HEK293 (cell line): ENCODE measurements at regions of chr19 and their contacts with region 1.

Region 1: DNA sequence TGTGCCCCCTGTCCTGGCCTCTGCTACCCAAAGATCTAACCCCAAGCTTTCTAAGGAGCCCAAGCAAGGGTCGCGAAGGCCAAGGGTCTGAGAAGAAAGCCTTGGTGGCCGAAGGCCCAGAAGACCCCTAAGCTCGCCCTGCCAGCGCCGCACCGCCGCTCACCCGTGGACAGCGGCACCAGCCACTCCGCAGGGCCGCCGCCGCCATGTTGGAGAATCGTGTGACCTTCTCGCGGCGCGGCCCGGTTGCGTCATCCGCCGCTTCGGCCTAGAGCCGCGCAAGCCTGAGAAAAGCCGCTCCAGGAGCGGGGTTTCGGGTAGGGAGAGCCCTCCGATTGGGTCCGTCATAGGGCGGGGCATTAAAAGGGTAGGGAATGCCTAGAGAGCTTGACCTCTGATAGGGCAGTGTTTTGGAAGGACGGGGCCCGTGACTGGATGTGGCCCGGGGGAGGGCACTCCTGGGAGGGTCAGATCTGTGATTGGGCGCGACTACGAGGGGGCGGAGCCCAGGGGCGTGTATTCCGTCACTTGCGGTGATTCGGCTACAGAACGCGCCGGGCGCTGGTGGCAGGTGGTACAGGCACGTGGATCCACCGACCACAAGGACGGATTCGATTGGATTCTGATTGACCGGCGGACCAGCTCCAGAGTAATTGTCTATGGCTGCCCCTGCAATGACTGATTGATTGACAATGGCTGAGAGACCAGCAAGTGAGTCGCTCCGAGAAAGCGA is at the start of gene TIMM44:
- H3K4me3 ChIP-seq: peak within 1 kb of the TSS; percentile 99
- H3K27ac ChIP-seq: peak within 1 kb of the TSS; percentile 90
- H3K4me1 ChIP-seq: no peaks in the 10 kb centered on the region
- CTCF ChIP-seq: no peak

Region 2: DNA sequence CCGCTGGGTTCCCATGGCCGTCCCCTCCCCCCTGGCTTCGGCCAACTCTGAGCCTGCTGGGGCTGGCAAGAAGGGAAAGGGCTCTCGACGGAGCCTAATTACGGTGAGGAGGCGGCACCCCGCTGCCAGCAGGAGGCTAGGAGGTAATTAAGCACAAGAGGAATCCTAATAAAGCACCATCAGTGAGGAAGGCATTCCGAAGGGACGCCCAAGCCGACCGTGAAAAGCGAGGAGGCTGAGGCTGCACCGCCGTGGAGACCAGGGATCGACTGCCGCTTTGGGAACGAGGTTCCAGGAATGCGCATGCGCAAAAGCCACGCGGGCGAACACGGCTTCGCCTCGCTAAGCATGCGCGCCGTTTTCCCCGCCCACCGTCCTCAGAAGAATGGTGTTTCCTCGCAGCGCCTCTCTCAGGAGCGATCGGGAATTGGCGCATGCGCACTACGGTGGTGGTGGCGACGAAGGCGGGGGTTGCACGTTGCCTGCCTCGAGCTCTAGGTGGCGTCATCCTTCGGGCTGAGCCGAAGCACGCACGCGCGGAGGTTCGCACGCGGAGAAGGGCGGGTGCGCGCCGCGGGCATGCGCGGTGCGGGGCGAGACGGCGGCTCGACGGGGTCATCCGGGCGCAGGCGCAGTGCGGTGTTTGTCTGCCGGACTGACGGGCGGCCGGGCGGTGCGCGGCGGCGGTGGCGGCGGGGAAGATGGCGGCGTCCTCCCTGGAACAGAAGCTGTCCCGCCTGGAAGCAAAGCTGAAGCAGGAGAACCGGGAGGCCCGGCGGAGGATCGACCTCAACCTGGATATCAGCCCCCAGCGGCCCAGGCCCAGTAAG is 40.2 kb before region 1 on chr19 and contains the start of gene MAP2K7:
- CTCF ChIA-PET with region 1: interaction called, 5 read pairs
- POLR2A ChIA-PET with region 1: interaction called, 13 read pairs
- H3K4me3 ChIP-seq: peak within 1 kb of the TSS; percentile 90
- H3K27ac ChIP-seq: peak within 1 kb of the TSS; percentile 80
- H3K4me1 ChIP-seq: peaks cover 5% of the 10 kb centered on the region; the same call in 1 of the 2 replicates
- CTCF ChIP-seq: peak; percentile 100

Region 3: DNA sequence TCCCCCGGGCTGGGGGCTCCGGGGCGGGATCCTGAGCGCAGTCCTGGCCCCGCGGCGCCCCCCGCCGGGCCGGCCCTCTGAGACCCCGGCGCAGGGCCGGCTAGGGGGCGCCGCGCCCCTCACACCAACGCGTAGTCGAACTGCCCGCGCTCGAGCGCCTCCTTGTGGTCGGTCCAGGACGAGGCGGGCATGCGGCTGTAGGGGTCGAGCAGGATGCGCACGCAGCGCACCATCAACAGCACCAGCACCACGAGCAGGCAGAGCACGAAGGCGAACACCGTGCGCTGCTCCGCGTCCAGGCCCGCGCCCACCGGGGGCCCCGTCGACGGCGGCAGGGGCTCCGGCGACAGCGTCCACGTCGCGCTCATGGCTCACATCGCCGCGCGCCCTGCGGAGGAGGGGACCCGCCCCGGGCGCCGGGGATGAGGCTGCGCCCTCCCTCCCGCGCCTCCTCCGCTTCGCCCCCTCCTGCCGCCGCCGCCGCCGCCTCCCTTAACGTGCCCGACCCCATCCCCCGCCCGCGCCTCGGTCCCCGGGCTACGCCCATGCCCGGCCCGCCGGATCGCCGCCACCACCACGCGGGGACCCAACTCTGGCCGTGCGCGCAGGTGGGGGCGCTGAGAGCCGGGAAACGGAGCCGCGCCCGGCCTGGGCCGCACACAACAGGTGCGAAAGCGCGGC is 18.3 kb before region 1 on chr19:
- CTCF ChIA-PET with region 1: interaction called, 25 read pairs
- POLR2A ChIA-PET with region 1: interaction called, 60 read pairs
- H3K4me3 ChIP-seq: peak overlapping the region; percentile 30
- H3K27ac ChIP-seq: peak overlapping the region; percentile 48; the same call in 1 of the 2 replicates
- H3K4me1 ChIP-seq: peaks cover 20% of the 10 kb centered on the region
- CTCF ChIP-seq: peak; percentile 95

Region 4: DNA sequence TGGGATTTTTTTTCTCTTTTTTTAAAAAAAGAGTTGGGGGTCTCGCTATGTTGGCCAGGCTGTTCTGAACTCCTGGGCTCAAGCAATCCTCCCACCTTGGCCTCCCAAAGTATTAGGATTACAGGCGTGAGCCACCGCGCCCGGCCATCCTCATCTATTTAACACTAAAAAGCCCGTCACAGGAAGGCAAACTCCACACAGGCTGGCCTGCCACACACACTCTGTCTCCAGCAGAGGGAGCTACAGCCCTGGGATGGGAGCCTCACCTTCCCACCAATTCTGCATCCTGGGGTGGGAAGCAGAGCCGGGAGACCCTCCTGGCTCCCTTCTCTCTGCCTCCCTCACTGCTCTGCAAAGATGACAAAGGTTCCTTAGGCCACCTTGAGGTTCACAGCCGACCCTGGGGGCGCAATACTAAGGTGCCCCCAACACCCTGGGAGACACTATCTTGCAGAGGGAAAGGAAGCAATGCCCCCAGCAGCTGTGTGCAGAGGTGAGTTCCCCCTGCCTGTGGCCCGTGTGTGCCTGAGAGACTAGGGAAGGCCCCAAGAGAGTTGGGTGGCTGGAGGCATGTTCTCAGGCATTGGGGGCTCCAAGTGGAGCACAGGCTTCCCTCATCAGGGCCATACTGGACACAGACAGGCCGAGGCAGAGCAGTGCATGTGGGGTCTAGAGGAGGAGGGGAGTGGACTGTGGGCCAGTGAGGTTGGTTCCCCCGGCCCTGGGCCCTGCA is 27.3 kb after region 1 on chr19:
- CTCF ChIA-PET with region 1: interaction called, 17 read pairs
- POLR2A ChIA-PET with region 1: interaction called, 10 read pairs
- H3K4me3 ChIP-seq: no peak overlapping the region
- H3K27ac ChIP-seq: no peak overlapping the region
- H3K4me1 ChIP-seq: no peaks in the 10 kb centered on the region
- CTCF ChIP-seq: peak; percentile 68

Region 5: DNA sequence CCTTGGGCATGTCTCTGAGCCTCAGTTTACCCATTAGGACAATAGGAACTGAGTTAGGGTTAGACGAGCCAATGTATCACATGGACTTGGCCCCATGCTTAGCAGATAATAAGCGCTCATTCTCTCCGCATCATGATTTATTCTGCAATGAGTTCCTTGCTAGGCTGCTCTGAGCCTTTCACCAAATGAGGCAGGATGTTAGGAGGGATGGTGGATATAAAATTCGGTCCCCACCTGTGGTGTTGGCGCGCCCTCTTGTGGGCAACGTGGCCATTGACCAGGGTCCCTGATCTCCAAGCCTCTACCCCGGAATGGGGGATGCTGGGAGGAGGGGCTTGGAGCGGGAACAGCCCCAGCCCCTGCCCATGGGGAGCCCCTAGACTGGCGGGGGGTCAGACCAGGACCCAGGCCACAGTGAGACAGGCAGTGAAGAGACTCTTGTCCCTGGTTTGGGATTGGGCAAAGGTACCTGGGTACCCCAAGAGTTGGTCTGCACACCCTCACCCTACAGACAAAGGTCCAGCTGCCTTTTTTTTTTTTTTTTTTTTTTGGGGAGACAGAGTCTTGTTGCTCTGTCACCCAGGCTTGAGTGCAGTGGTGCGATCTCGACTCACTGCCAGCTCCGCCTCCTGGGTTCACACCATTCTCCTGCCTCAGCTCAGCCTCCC is 309.4 kb after region 1 on chr19:
- CTCF ChIA-PET with region 1: interaction called, 26 read pairs
- POLR2A ChIA-PET with region 1: interaction called, 5 read pairs
- H3K4me3 ChIP-seq: no peak overlapping the region
- H3K27ac ChIP-seq: no peak overlapping the region
- H3K4me1 ChIP-seq: no peaks in the 10 kb centered on the region
- CTCF ChIP-seq: peak; percentile 90